ENCODE measurements at regions of chr4 and their contacts with region 1.

Region 1: GRCh38 chr4:183602557-183603027 is 56.4 kb downstream of the RWDD4 start:
- DNase-seq: no peak
- ATAC-seq: no peak
- H3K4me3 ChIP-seq: no peak overlapping the region
- H3K27ac ChIP-seq: no peak overlapping the region
- H3K4me1 ChIP-seq: no peaks in the 10 kb centered on the region
- H3K27me3 ChIP-seq: no peaks in the 10 kb centered on the region

Region 2: DNA sequence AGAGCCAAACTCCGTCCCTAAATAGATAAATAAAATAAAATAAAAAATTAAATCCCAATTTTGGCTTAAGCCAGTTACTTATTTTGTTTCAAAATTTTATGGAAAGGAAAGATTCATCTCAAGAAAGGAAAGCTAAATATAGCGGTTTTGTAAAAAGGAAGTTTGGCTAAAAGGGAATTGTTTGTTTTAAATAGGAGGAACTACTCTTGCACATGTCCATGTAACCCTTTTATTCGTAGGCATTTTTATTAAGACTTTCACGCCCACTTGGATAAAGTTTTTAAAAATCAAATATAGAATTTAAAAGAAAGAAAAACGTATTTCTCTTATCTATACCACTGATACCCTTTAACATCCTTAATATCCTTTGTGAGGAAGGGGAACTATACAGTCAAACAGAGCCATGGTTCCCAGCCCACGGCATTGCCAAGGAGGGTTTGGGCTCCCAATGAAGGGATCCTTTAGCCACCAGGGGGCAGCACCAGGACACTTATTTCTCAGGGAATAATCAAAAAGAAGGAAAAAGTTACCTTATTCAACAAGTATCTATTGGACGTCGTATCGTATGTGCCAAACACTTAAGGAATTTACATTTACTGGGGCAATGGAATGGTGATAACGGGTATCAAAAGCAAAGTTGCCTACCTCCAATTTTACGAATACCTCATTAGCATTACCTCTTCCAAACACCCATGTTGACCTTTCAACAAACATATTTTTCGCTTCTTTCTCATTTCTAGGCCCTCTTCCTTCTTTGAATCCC is 130.5 kb before region 1 on chr4:
- intact Hi-C with region 1: loop called in 3 of 4 experiments (anchors 5 to 10 kb)
- DNase-seq: peak; percentile 90 to 96 (median 90)
- ATAC-seq: peak; percentile 93 to 94
- H3K4me3 ChIP-seq: peak overlapping the region; percentile 22
- H3K27ac ChIP-seq: no peak overlapping the region
- H3K4me1 ChIP-seq: no peaks in the 10 kb centered on the region
- H3K27me3 ChIP-seq: no peaks in the 10 kb centered on the region

Region 3: DNA sequence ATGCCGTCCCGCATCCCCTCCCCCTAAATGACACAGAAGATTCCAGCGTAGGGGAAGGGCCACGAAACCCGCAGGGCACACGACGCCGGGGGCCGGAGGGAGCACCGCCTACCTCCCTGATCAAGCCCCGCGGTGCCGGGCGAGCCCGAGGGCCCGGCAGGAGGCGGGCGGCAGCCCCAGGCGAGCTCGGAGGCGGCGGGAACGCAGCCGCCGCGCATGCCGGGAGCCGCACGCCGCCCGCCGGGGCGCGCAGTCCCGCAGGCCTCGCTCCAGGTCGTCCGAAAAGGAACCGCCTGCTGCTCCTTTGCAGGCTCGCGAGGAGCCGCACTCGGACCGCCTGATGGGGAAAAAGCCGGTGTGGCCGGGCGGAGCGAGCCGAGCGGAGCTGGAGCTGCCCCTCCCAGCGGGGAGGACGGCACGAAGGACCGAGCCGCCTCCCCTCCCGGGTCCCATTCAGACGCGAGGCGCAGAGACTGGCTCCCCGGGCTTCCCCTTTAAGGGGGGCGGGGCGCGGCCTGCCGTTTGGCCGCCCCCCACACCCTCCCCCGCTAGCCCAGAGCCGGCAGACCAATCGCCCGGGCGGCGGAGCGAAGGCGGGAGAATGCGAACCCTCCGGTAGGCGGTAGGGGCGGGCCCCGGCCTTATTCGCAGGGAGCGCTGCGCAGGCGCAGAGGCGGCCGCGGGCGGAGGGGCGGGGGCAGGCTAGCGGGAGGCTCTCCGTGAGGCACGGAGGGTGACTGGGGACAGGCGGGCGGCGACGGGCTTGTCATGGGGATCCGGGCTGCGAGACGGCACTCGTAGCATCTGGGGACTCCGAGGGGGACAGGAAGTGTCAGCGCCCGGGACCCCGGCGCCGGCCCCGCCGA is 98.3 kb before region 1 on chr4:
- intact Hi-C with region 1: loop called in 1 of 4 experiments (anchors 10 kb)
- DNase-seq: peak; percentile 99 to 100 (median 100)
- ATAC-seq: peak; percentile 98
- H3K4me3 ChIP-seq: peak overlapping the region; percentile 84
- H3K27ac ChIP-seq: peak overlapping the region; percentile 99
- H3K4me1 ChIP-seq: no peaks in the 10 kb centered on the region
- H3K27me3 ChIP-seq: no peaks in the 10 kb centered on the region

Region 4: GRCh38 chr4:183722731-183723560 is 120.4 kb after region 1 on chr4:
- intact Hi-C with region 1: no loop called
- DNase-seq: peak; percentile 72 to 85 (median 81)
- ATAC-seq: peak; percentile 76 to 81
- H3K4me3 ChIP-seq: peak overlapping the region; percentile 52
- H3K27ac ChIP-seq: no peak overlapping the region
- H3K4me1 ChIP-seq: no peaks in the 10 kb centered on the region
- H3K27me3 ChIP-seq: no peaks in the 10 kb centered on the region